B cell (primary cell): ENCODE measurements at regions of chr1 and their contacts with region 1.

Region 1: GRCh38 chr1:220089650-220090556 is at the start of gene BPNT1:
- DNase-seq: peak; percentile 99
- ATAC-seq: peak; percentile 73
- H3K4me3 ChIP-seq: peak within 1 kb of the TSS; percentile 67 to 88 (median 77)
- H3K4me3 Mint-ChIP-seq: peak within 1 kb of the TSS; percentile 97
- H3K27ac ChIP-seq: peak within 1 kb of the TSS; percentile 80 to 82
- H3K27ac Mint-ChIP-seq: peak within 1 kb of the TSS; percentile 94
- H3K4me1 ChIP-seq: peaks cover 20 to 31% of the 10 kb centered on the region in 2 donors
- H3K4me1 Mint-ChIP-seq: peaks cover 36% of the 10 kb centered on the region
- H3K27me3 ChIP-seq: no peaks in the 10 kb centered on the region
- H3K27me3 Mint-ChIP-seq: no peaks in the 10 kb centered on the region
- CTCF ChIP-seq: no peak
- total RNA-seq, gene BPNT1: 18.3 and 21.4 TPM in 2 replicates

Region 2: GRCh38 chr1:218284934-218285635 is 1804.8 kb before region 1 on chr1 and contains the start of gene RRP15:
- CTCF ChIA-PET with region 1: no interaction called
- POLR2A ChIA-PET with region 1: no interaction called
- intact Hi-C with region 1: loop called (anchors 5 kb)
- DNase-seq: peak; percentile 92
- ATAC-seq: peak; percentile 97
- H3K4me3 ChIP-seq: peak within 1 kb of the TSS; percentile 76 to 100 (median 87)
- H3K4me3 Mint-ChIP-seq: peak within 1 kb of the TSS; percentile 97
- H3K27ac ChIP-seq: peak within 1 kb of the TSS; percentile 76 to 81
- H3K27ac Mint-ChIP-seq: peak within 1 kb of the TSS; percentile 98
- H3K4me1 ChIP-seq: peaks cover 15 to 17% of the 10 kb centered on the region in 2 donors
- H3K4me1 Mint-ChIP-seq: peaks cover 31% of the 10 kb centered on the region
- H3K27me3 ChIP-seq: peaks cover 0 to 11% (median 2%) of the 10 kb centered on the region in 4 experiments
- H3K27me3 Mint-ChIP-seq: peaks cover 16% of the 10 kb centered on the region
- CTCF ChIP-seq: no peak
- total RNA-seq, gene RRP15: 16.4 and 20.2 TPM in 2 replicates

Region 3: DNA sequence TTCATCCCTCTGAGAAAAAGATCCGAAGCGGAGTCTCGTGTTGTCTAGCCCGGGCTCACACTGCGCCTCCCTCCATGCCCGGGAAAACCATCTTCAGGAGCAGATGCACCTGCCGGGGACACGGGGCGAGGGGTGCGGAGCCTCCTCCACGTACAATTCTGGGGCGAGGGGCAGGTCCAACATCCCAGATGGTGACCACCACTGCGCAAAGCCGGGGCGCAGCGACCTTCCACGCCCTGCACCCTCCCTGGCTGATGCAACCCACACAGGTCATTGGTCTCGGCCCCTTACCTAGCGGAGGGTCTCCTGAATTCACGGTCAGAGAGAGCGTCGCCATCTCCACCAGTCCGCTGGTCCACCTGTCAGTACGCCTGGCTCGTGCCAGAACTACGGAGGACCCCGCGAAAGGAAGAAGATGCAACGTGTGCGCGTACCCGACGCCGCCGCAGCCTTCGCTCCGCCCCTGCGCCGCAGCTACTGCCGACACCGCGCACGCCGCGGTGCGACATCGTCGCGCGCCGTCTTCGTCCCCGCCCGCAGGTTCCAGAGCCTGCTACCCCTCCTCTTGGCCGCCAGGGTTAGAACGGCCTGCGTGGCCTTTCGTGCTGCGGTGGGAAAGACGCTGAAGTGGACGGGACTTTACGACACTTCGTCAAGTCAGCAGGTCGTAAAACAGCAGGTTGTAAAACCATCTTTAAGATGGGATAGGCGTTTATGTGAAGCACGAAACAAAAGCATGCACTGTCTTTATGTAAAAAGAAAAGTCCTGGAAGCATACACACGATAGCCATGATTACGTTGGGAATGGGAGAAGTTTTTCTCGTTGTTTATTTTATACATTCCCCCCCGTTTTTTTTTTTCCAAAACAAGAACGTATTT is 43.6 kb before region 1 on chr1 and contains the start of gene EPRS1:
- CTCF ChIA-PET with region 1: interaction called, 5 read pairs
- POLR2A ChIA-PET with region 1: interaction called, 5 read pairs
- intact Hi-C with region 1: loop called (anchors 1 kb)
- DNase-seq: peak; percentile 98
- ATAC-seq: peak; percentile 99
- H3K4me3 ChIP-seq: peak within 1 kb of the TSS; percentile 71 to 97 (median 94)
- H3K4me3 Mint-ChIP-seq: peak within 1 kb of the TSS; percentile 90
- H3K27ac ChIP-seq: peak within 1 kb of the TSS; percentile 64 to 83
- H3K27ac Mint-ChIP-seq: peak within 1 kb of the TSS; percentile 90
- H3K4me1 ChIP-seq: peaks cover 9 to 16% of the 10 kb centered on the region in 2 donors
- H3K4me1 Mint-ChIP-seq: peaks cover 27% of the 10 kb centered on the region
- H3K27me3 ChIP-seq: no peaks in the 10 kb centered on the region
- H3K27me3 Mint-ChIP-seq: no peaks in the 10 kb centered on the region
- CTCF ChIP-seq: peak; percentile 78
- total RNA-seq, gene EPRS1: 56.9 and 61.7 TPM in 2 replicates

Region 4: DNA sequence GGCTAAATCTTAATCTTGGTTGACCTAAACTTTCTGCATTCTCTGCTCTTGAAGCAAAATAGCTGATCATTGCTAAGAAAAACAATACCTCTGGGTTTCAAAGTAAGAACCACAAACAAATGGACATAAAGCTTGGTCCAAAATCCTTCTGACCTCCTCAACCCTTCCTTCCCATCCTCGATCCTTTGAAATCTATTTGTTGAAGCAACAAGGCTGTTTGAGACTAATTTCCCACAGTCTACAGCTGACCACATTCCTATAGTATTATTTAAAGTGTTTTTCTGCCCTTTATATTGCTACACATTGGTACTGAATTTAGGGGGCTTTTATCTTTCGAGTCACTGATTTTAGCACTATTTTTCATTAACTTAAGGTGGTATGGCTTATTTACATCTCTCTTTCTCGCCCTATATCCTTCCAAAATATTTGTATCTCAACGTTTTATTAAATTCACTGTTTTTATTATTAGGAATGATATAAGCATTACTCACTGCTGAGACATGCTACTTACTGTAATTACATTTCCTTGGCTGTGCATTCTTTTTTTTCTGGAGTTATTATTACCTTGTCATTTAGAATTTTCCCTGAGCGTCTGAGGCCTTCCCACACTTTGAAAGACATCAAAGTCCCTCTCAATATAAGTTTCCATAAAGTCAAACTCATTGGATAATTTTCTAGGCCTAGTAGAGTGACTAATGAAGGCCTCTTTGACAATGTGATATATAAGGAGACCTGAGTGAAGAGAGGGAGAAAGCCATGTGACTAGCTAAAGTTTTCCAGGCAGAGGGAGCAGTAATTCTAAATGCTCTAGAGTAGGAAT is 108.5 kb after region 1 on chr1:
- CTCF ChIA-PET with region 1: no interaction called
- POLR2A ChIA-PET with region 1: no interaction called
- intact Hi-C with region 1: no loop called
- DNase-seq: no peak
- ATAC-seq: no peak
- H3K4me3 ChIP-seq: no peak overlapping the region
- H3K4me3 Mint-ChIP-seq: no peak overlapping the region
- H3K27ac ChIP-seq: no peak overlapping the region
- H3K27ac Mint-ChIP-seq: no peak overlapping the region
- H3K4me1 ChIP-seq: no peaks in the 10 kb centered on the region
- H3K4me1 Mint-ChIP-seq: no peaks in the 10 kb centered on the region
- H3K27me3 ChIP-seq: no peaks in the 10 kb centered on the region
- H3K27me3 Mint-ChIP-seq: no peaks in the 10 kb centered on the region
- CTCF ChIP-seq: no peak